H1 (cell line): ENCODE measurements at regions of chr3 and their contacts with region 1.

Region 1: GRCh38 chr3:73827725-73828211 is 203.0 kb upstream of the PDZRN3 start:
- DNase-seq: no peak
- H3K4me3 ChIP-seq: no peak overlapping the region
- H3K27ac ChIP-seq: no peak overlapping the region
- H3K4me1 ChIP-seq: no peaks in the 10 kb centered on the region
- H3K27me3 ChIP-seq: no peaks in the 10 kb centered on the region
- CTCF ChIP-seq: no peak
- EP300 ChIP-seq: no peak
- POLR2A ChIP-seq: no peak
- RAD21 ChIP-seq: no peak

Region 2: DNA sequence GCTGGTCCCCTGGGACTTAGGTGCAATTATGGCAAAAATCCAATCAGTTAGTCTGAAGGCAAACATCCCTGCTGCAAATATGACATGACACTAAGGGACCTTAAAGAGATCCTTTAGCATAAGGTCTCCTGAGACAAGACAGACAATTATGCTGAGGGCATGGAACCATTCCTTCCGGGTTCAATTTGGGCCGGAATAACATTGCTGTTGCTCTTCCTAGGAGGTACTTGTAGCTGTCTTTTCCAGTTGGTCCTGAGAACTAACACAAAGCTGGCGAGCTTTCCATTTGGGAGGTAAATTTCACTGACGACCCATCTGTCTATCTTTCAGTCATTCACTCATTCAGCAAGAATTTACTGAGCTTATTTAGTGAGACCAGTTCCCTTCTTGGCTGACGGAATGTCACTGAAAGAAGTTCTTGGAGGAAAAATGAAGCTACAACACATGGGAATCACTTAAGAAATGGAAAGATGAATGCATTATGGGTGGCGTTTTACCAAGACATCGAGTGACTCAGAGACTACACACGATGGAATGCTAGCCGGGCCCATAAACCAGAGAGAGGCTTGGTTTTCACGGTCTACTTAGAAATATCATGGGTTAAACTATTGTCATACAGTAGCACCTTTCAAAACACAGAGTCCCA is 418.5 kb before region 1 on chr3:
- CTCF ChIA-PET with region 1: no interaction called
- POLR2A ChIA-PET with region 1: no interaction called
- DNase-seq: no peak
- H3K4me3 ChIP-seq: no peak overlapping the region
- H3K27ac ChIP-seq: no peak overlapping the region
- H3K4me1 ChIP-seq: peaks cover 0 to 3% (median 0%) of the 10 kb centered on the region in 4 experiments; a peak in 1 of 7 replicates
- H3K27me3 ChIP-seq: no peaks in the 10 kb centered on the region
- CTCF ChIP-seq: no peak
- EP300 ChIP-seq: no peak
- POLR2A ChIP-seq: no peak
- RAD21 ChIP-seq: no peak

Region 3: GRCh38 chr3:73719861-73720260 is 107.9 kb before region 1 on chr3:
- CTCF ChIA-PET with region 1: no interaction called
- POLR2A ChIA-PET with region 1: no interaction called
- DNase-seq: no peak
- H3K4me3 ChIP-seq: no peak overlapping the region
- H3K27ac ChIP-seq: no peak overlapping the region
- H3K4me1 ChIP-seq: no peaks in the 10 kb centered on the region
- H3K27me3 ChIP-seq: no peaks in the 10 kb centered on the region
- CTCF ChIP-seq: no peak
- EP300 ChIP-seq: no peak
- POLR2A ChIP-seq: no peak
- RAD21 ChIP-seq: no peak

Region 4: DNA sequence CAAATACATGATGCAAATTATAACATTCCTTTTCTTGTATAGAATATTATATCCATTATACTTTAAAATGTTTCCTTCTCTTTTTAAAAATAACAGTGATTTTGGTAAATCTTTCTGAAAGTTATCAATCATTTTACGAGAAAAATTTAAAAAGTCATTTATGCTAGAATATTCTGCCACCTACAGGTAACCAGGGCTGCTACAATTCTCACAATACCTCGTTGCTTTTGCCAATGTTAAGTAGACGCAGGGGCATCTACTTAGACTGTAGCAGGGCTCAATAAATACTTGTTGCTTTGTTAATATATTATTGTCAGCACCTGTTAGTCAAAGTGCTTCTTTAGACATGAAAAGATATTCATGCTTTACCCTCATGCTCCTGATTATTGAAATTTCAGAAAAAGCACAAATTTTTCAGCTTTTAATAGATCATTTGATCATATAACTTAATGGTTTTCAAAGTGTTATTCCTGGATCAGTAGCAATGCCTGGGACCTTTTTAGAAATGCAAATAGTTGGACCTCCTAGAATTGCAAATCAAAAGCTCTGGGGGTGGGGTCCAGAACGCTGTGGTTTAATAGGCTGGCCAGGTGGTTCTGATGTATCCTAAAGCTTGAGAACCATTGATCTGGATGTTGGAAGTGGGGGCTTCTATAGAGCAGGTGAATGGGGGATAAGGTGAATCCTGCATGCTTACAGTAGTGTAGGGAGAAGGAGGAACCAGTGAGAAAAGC is 20.6 kb after region 1 on chr3:
- CTCF ChIA-PET with region 1: interaction called, 13 read pairs
- POLR2A ChIA-PET with region 1: no interaction called
- DNase-seq: no peak
- H3K4me3 ChIP-seq: no peak overlapping the region
- H3K27ac ChIP-seq: no peak overlapping the region
- H3K4me1 ChIP-seq: peaks cover 0 to 4% (median 0%) of the 10 kb centered on the region in 4 experiments; a peak in 1 of 7 replicates
- H3K27me3 ChIP-seq: no peaks in the 10 kb centered on the region
- CTCF ChIP-seq: peak in 2 of 3 experiments; percentile 36 to 56; a peak in 2 of 4 replicates
- EP300 ChIP-seq: no peak
- POLR2A ChIP-seq: no peak
- RAD21 ChIP-seq: peak; percentile 65 to 67

Region 5: GRCh38 chr3:73894474-73895213 is 66.9 kb after region 1 on chr3:
- CTCF ChIA-PET with region 1: no interaction called
- POLR2A ChIA-PET with region 1: no interaction called
- DNase-seq: no peak
- H3K4me3 ChIP-seq: no peak overlapping the region
- H3K27ac ChIP-seq: no peak overlapping the region
- H3K4me1 ChIP-seq: peaks cover 0 to 3% (median 0%) of the 10 kb centered on the region in 4 experiments; a peak in 1 of 7 replicates
- H3K27me3 ChIP-seq: no peaks in the 10 kb centered on the region
- CTCF ChIP-seq: no peak
- EP300 ChIP-seq: no peak
- POLR2A ChIP-seq: no peak
- RAD21 ChIP-seq: no peak